IMR-90 (cell line): ENCODE measurements at regions of chr5 and their contacts with region 1.

Region 1: DNA sequence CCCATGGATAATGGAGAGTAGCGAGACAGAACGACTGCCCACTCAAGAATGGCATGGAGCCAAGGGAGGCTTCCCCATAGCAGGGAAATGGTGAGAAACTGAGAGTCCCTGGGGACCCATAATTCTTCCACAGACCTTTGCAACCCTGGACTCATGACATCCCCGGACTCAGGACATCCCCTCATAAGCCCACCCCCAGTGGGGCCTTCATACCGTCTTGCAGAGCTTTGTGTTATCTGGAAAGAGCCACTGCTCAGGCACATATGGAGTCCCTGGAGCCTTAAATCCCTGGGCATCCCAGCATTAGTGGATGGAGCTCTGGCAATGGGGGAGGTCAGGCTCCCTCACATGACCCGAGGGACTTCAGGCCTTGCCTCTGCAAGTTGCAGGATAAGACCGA is 865.4 kb upstream of the ARRDC3 start:
- DNase-seq: no peak
- ATAC-seq: no peak
- H3K4me3 ChIP-seq: no peak overlapping the region
- H3K27ac ChIP-seq: no peak overlapping the region
- H3K4me1 ChIP-seq: no peaks in the 10 kb centered on the region
- H3K27me3 ChIP-seq: no peaks in the 10 kb centered on the region
- CTCF ChIP-seq: no peak
- POLR2A ChIP-seq: no peak
- RAD21 ChIP-seq: no peak

Region 2: GRCh38 chr5:92267830-92268742 is 19.6 kb after region 1 on chr5:
- CTCF ChIA-PET with region 1: no interaction called
- POLR2A ChIA-PET with region 1: interaction called, 15 read pairs
- dilution Hi-C with region 1: no loop called
- in situ Hi-C with region 1: no loop called
- intact Hi-C with region 1: no loop called
- DNase-seq: no peak
- ATAC-seq: no peak
- H3K4me3 ChIP-seq: no peak overlapping the region
- H3K27ac ChIP-seq: no peak overlapping the region
- H3K4me1 ChIP-seq: no peaks in the 10 kb centered on the region
- H3K27me3 ChIP-seq: no peaks in the 10 kb centered on the region
- CTCF ChIP-seq: no peak
- POLR2A ChIP-seq: no peak
- RAD21 ChIP-seq: no peak

Region 3: DNA sequence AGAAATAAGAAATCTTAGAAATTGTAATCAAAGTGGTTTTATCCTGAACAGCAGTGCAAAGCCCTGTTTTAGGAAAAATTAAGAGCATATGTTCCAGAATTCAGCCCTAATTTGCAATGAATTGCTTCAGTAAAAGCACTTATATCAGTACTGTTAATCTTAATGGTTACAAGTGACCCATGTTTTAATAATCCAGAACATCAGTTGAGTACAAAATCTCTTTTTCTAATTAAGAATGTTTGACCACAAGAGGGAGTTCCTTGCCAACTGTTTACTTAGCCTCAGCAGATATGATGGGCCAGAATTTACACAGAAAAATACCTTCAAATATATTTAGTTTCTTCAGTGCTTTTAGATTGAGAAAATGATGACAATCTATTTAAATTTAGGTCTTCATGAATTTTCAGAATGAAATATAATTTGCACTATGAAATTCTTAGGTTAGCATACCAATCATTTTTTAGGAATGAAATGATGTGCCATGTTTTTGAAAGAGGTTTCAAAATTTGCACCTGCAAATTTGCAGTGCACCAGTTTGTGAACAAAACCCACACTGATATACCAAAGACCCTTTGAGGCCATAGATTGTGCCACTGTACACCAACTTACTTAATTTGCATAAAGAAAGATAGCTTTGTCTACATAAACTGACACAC is 60.9 kb after region 1 on chr5:
- CTCF ChIA-PET with region 1: no interaction called
- POLR2A ChIA-PET with region 1: no interaction called
- dilution Hi-C with region 1: no loop called
- in situ Hi-C with region 1: no loop called
- intact Hi-C with region 1: no loop called
- DNase-seq: peak; percentile 59
- ATAC-seq: peak; percentile 74
- H3K4me3 ChIP-seq: no peak overlapping the region
- H3K27ac ChIP-seq: no peak overlapping the region
- H3K4me1 ChIP-seq: no peaks in the 10 kb centered on the region
- H3K27me3 ChIP-seq: no peaks in the 10 kb centered on the region
- CTCF ChIP-seq: peak; percentile 66
- POLR2A ChIP-seq: no peak
- RAD21 ChIP-seq: peak; percentile 77